Tibial artery (tissue), 4 donors: ENCODE measurements at regions of chr18 and their contacts with region 1.

Region 1: GRCh38 chr18:8654503-8655451 is 45.5 kb downstream of the RAB12 start:
- DNase-seq: no peak
- H3K4me3 ChIP-seq: no peak overlapping the region
- H3K27ac ChIP-seq: no peak overlapping the region
- H3K4me1 ChIP-seq: no peaks in the 10 kb centered on the region
- H3K27me3 ChIP-seq: peaks cover 0 to 4% of the 10 kb centered on the region in 2 donors
- CTCF ChIP-seq: peak; percentile 62 to 78

Region 2: GRCh38 chr18:8608795-8609658 is 45.8 kb before region 1 on chr18 and contains the start of gene RAB12:
- intact Hi-C with region 1: no loop called
- DNase-seq: peak; percentile 76 to 92
- H3K4me3 ChIP-seq: peak within 1 kb of the TSS; percentile 89 to 93
- H3K27ac ChIP-seq: peak within 1 kb of the TSS; percentile 86
- H3K4me1 ChIP-seq: peaks cover 0 to 47% (median 25%) of the 10 kb centered on the region in 4 donors
- H3K27me3 ChIP-seq: no peaks in the 10 kb centered on the region
- CTCF ChIP-seq: peak; percentile 59 to 94

Region 3: GRCh38 chr18:8858888-8859511 is 204.2 kb after region 1 on chr18:
- intact Hi-C with region 1: no loop called
- DNase-seq: no peak
- H3K4me3 ChIP-seq: no peak overlapping the region
- H3K27ac ChIP-seq: no peak overlapping the region
- H3K4me1 ChIP-seq: no peaks in the 10 kb centered on the region
- H3K27me3 ChIP-seq: no peaks in the 10 kb centered on the region
- CTCF ChIP-seq: no peak

Region 4: GRCh38 chr18:8982416-8983184 is 327.8 kb after region 1 on chr18:
- intact Hi-C with region 1: loop called (anchors 5 kb)
- DNase-seq: no peak
- H3K4me3 ChIP-seq: no peak overlapping the region
- H3K27ac ChIP-seq: no peak overlapping the region
- H3K4me1 ChIP-seq: no peaks in the 10 kb centered on the region
- H3K27me3 ChIP-seq: no peaks in the 10 kb centered on the region
- CTCF ChIP-seq: peak in 1 of 2 experiments; percentile 4